Mammary epithelial cell (primary cell): ENCODE measurements at regions of chr16 and their contacts with region 1.

Region 1: GRCh38 chr16:23504451-23505179 is 5.7 kb downstream of the GGA2 start:
- DNase-seq: peak; percentile 96
- H3K4me3 ChIP-seq: no peak overlapping the region
- H3K27ac ChIP-seq: peak overlapping the region; percentile 8
- H3K4me1 ChIP-seq: peaks cover 37% of the 10 kb centered on the region
- H3K27me3 ChIP-seq: no peaks in the 10 kb centered on the region
- CTCF ChIP-seq: no peak

Region 2: GRCh38 chr16:23134274-23134673 is 370.3 kb before region 1 on chr16:
- CTCF ChIA-PET with region 1: no interaction called
- dilution Hi-C with region 1: no loop called
- in situ Hi-C with region 1: no loop called
- intact Hi-C with region 1: no loop called
- DNase-seq: no peak
- H3K4me3 ChIP-seq: no peak overlapping the region
- H3K27ac ChIP-seq: no peak overlapping the region
- H3K4me1 ChIP-seq: peaks cover 8% of the 10 kb centered on the region
- H3K27me3 ChIP-seq: no peaks in the 10 kb centered on the region
- CTCF ChIP-seq: no peak

Region 3: GRCh38 chr16:23182460-23183309 is 321.9 kb before region 1 on chr16 and contains the start of gene SCNN1G:
- CTCF ChIA-PET with region 1: no interaction called
- dilution Hi-C with region 1: no loop called
- in situ Hi-C with region 1: no loop called
- intact Hi-C with region 1: loop called (anchors 5 kb)
- DNase-seq: peak; percentile 88
- H3K4me3 ChIP-seq: peak within 1 kb of the TSS; percentile 68 to 87 (median 69)
- H3K27ac ChIP-seq: no peak within 1 kb of the TSS
- H3K4me1 ChIP-seq: peaks cover 14% of the 10 kb centered on the region
- H3K27me3 ChIP-seq: no peaks in the 10 kb centered on the region
- CTCF ChIP-seq: peak; percentile 94 to 97
- total RNA-seq, gene SCNN1G: 1.2 to 4.7 TPM

Region 4: GRCh38 chr16:23194497-23195221 is 310.0 kb before region 1 on chr16:
- CTCF ChIA-PET with region 1: no interaction called
- dilution Hi-C with region 1: no loop called
- in situ Hi-C with region 1: no loop called
- intact Hi-C with region 1: no loop called
- DNase-seq: no peak
- H3K4me3 ChIP-seq: no peak overlapping the region
- H3K27ac ChIP-seq: no peak overlapping the region
- H3K4me1 ChIP-seq: no peaks in the 10 kb centered on the region
- H3K27me3 ChIP-seq: no peaks in the 10 kb centered on the region
- CTCF ChIP-seq: no peak

Region 5: DNA sequence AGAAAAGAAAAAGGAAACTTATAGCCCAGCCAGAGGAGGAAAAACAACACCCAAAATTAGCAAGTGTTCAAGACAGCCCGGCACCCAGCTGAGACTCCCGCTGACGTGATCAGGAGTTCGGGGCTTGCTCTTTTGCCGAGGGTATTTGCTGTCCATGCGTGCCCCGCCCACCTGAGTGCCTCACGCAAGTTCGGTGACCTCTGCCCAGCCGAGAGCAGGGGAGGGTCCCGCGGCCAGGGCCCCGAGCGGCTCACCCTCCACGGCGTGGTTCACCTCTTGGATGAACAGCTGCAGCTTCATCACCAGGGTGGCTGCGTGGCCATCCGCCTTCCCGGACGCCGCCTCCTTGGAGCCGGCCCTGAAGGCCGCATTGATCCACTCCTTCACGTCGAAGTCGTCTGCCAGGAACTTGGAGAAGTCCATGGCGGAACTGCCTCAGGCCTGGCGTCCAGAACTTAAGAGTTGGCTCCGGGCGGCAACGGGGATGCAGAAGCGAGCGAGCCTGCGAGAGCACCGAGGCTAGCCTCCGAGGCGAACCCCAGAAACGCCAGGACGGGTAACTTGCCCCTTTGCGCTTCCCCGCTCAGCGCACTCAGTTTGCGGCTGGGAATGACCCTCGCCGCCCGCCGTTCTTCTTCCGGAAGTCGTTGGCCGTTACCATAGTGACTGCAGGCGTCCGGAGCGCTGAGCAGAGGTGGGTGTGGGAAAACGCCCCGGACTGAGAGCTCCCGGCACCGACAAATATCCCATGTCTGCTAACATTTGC is 51.9 kb before region 1 on chr16 and contains the start of gene COG7:
- CTCF ChIA-PET with region 1: no interaction called
- dilution Hi-C with region 1: no loop called
- in situ Hi-C with region 1: loop called in 1 of 2 experiments (anchors 10 kb)
- intact Hi-C with region 1: loop called (anchors 2 kb)
- DNase-seq: peak; percentile 86
- H3K4me3 ChIP-seq: peak within 1 kb of the TSS; percentile 70 to 96 (median 79)
- H3K27ac ChIP-seq: peak within 1 kb of the TSS; percentile 53
- H3K4me1 ChIP-seq: peaks cover 12% of the 10 kb centered on the region
- H3K27me3 ChIP-seq: no peaks in the 10 kb centered on the region
- CTCF ChIP-seq: no peak
- total RNA-seq, gene COG7: 19.2 to 20.8 TPM

Region 6: DNA sequence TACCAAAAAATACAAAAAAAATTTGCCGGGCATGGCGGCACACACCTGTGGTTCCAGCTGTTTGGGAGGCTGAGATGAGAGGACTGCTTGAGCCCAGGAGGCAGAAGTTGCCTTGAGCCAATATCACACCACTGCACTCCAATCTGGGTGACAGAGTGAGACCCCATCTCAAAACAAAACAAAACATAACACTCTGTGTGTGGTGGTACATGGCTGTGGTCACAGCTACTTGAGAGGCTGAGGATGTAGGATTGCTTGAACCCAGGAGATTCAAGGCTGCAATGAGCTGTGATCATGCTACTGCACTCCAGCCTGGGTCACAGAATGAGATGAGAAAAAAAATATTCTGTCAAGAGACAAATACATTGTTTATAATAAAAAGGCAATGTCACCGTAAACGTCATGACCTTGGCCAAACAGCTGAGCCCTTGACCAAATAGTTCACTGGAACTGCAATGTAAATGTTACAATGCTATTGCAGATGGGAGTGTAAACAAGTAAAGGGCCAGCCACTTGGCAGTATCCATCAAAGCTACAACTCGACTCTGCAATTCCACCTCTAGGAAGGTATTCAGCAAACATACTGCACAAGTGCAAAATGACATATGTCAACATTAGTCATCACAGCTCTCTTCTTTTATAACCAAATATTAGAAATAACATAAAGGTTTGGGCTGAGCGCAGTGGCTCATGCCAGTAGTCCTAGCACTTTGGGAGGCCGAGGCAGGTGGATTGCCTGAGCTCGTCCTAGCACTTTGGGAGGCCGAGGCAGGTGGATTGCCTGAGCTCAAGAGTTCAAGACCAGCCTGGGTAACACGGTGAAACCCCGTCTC is 35.6 kb after region 1 on chr16:
- CTCF ChIA-PET with region 1: no interaction called
- dilution Hi-C with region 1: no loop called
- in situ Hi-C with region 1: no loop called
- intact Hi-C with region 1: no loop called
- DNase-seq: no peak
- H3K4me3 ChIP-seq: no peak overlapping the region
- H3K27ac ChIP-seq: no peak overlapping the region
- H3K4me1 ChIP-seq: peaks cover 18% of the 10 kb centered on the region
- H3K27me3 ChIP-seq: no peaks in the 10 kb centered on the region
- CTCF ChIP-seq: no peak

Region 7: DNA sequence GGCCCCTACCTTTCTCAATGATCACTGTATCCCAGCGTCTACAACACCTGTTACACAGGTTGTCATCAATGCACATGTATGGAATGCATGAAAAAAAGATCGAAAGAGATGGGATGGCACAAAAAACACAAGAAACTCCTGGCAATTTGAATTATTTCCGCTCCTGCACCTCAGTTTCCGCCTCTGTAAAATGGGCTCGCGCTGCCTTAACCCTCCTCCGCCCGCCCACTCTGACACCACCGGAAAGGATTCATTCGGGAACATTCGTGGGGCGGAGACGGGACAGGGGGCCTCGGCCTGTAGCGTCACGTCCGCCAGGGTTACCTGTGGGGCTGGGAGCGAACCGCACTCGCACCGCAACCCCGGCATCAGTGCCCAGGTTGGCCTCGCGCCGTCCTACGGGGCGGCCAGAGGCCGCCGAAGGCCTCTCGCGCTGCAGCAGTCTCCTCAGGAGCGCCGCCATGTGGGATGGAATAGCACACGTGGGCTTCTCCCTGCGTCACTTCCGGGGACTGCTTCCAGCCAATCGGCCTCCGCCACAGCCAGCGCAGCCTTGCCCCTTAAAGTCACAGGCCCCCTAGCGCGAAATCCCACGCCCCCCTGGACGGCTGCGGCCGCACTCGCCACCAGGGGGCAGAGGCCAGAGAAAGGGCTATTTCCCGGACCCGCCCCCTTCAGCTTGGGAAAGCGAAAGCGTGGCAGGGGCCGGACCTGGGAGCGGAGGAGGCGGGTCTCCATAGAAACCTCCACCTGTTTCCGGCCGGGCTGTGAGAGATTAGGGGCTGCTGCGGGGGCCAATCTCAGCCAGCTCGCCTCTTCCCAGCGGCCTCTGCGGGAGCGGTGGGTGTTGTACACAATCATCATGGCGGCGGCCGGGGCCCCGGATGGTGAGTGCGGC is 52.5 kb after region 1 on chr16 and contains the starts of genes EARS2 and UBFD1:
- CTCF ChIA-PET with region 1: no interaction called
- dilution Hi-C with region 1: no loop called
- in situ Hi-C with region 1: no loop called
- intact Hi-C with region 1: loop called (anchors 1 kb)
- DNase-seq: peak; percentile 99
- H3K4me3 ChIP-seq: peak within 1 kb of the TSS; percentile 92 to 96 (median 95)
- H3K27ac ChIP-seq: peak within 1 kb of the TSS; percentile 91
- H3K4me1 ChIP-seq: peaks cover 11% of the 10 kb centered on the region
- H3K27me3 ChIP-seq: no peaks in the 10 kb centered on the region
- CTCF ChIP-seq: peak; percentile 75 to 96
- total RNA-seq, gene EARS2: 30.1 to 47.7 TPM
- total RNA-seq, gene UBFD1: 57.3 to 79.7 TPM